ENCODE measurements at regions of chr3 and their contacts with region 1.

Region 1: GRCh38 chr3:165206454-165207266 is 10.5 kb upstream of the SLITRK3 start:
- DNase-seq: peak in 1 of 2 experiments; percentile 66
- H3K4me3 ChIP-seq: peak overlapping the region in 1 of 4 experiments; percentile 51; a peak in 3 of 8 replicates
- H3K27ac ChIP-seq: no peak overlapping the region
- H3K4me1 ChIP-seq: no peaks in the 10 kb centered on the region
- H3K27me3 ChIP-seq: peaks cover 0 to 5% (median 0%) of the 10 kb centered on the region in 4 experiments; a peak in 1 of 7 replicates
- CTCF ChIP-seq: peak; percentile 77 to 99 (median 83)
- EP300 ChIP-seq: no peak
- POLR2A ChIP-seq: no peak
- RAD21 ChIP-seq: peak; percentile 67 to 79

Region 2: DNA sequence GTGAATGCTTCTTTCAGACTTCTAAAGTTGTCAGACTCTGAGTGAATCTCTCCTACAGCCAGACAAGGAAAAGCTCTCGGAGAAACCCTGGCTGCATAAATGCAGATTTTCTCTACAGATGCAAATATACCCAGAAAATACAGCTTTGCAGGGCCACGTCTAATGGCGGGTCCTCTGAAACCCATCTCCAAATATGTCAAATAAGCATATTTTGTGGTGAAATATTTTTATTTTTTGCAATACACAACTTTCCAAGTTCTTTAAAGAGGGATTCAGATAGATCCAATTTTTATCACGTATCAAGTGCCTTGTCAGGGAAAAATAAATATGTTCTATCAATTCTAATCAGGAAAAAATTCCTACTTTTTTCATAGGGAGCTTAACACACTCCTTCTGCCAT is 357.7 kb before region 1 on chr3:
- CTCF ChIA-PET with region 1: no interaction called
- POLR2A ChIA-PET with region 1: no interaction called
- DNase-seq: no peak
- H3K4me3 ChIP-seq: no peak overlapping the region
- H3K27ac ChIP-seq: no peak overlapping the region
- H3K4me1 ChIP-seq: peaks cover 4 to 11% (median 5%) of the 10 kb centered on the region in 4 experiments; a peak in 6 of 7 replicates
- H3K27me3 ChIP-seq: no peaks in the 10 kb centered on the region
- CTCF ChIP-seq: no peak
- EP300 ChIP-seq: no peak
- POLR2A ChIP-seq: no peak
- RAD21 ChIP-seq: no peak

Region 3: GRCh38 chr3:165195640-165196576 is 10.8 kb before region 1 on chr3 and contains the start of gene SLITRK3:
- CTCF ChIA-PET with region 1: interaction called, 22 read pairs
- POLR2A ChIA-PET with region 1: no interaction called
- DNase-seq: peak in 1 of 2 experiments; percentile 65
- H3K4me3 ChIP-seq: peak within 1 kb of the TSS; percentile 83 to 85 (median 83)
- H3K27ac ChIP-seq: no peak within 1 kb of the TSS
- H3K4me1 ChIP-seq: peaks cover 0 to 13% (median 1%) of the 10 kb centered on the region in 4 experiments; a peak in 5 of 7 replicates
- H3K27me3 ChIP-seq: peaks cover 6 to 41% (median 35%) of the 10 kb centered on the region in 4 experiments
- CTCF ChIP-seq: no peak
- EP300 ChIP-seq: no peak
- POLR2A ChIP-seq: peak in 1 of 2 experiments; percentile 19; a peak in 1 of 3 replicates
- RAD21 ChIP-seq: no peak
- total RNA-seq, gene SLITRK3: 3.2 and 3.4 TPM in 2 replicates

Region 4: GRCh38 chr3:165446555-165446954 is 239.9 kb after region 1 on chr3:
- CTCF ChIA-PET with region 1: no interaction called
- POLR2A ChIA-PET with region 1: no interaction called
- DNase-seq: no peak
- H3K4me3 ChIP-seq: no peak overlapping the region
- H3K27ac ChIP-seq: no peak overlapping the region
- H3K4me1 ChIP-seq: no peaks in the 10 kb centered on the region; a peak in 1 of 7 replicates
- H3K27me3 ChIP-seq: no peaks in the 10 kb centered on the region
- CTCF ChIP-seq: no peak
- EP300 ChIP-seq: no peak
- POLR2A ChIP-seq: no peak
- RAD21 ChIP-seq: no peak

Region 5: GRCh38 chr3:165466856-165467255 is 260.2 kb after region 1 on chr3:
- CTCF ChIA-PET with region 1: no interaction called
- POLR2A ChIA-PET with region 1: no interaction called
- DNase-seq: no peak
- H3K4me3 ChIP-seq: no peak overlapping the region
- H3K27ac ChIP-seq: no peak overlapping the region
- H3K4me1 ChIP-seq: no peaks in the 10 kb centered on the region
- H3K27me3 ChIP-seq: no peaks in the 10 kb centered on the region
- CTCF ChIP-seq: no peak
- EP300 ChIP-seq: no peak
- POLR2A ChIP-seq: no peak
- RAD21 ChIP-seq: no peak